ENCODE measurements at regions of chr1 and their contacts with region 1.

Region 1: DNA sequence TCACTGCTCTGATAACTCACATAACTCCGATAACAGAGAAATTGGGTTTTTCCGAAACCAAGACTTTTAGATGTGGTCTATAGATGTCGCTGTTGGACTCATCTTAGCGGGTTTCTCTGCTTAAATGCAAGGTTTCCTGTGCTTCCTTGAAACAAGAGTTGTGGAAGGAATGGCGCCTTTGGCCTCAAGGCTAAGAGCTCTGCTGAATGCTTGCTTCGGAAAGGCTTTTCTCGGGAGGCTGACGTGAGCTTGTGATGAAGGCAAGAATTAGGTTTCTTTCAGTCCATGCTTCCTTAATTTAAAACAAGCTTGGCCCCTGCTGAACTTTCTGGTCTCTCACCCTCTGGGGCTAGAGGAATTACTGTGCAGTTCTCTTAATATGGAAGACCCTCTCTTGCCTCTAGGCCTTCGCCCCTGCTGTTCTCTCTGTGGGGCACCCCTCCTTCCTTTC is 113.5 kb downstream of the MAP3K21 start:
- DNase-seq: peak; percentile 51 to 54
- H3K4me3 ChIP-seq: no peak overlapping the region
- H3K27ac ChIP-seq: no peak overlapping the region
- H3K4me1 ChIP-seq: peaks cover 0 to 6% (median 2%) of the 10 kb centered on the region in 4 experiments; a peak in 2 of 7 replicates
- H3K27me3 ChIP-seq: no peaks in the 10 kb centered on the region
- CTCF ChIP-seq: peak in 2 of 3 experiments; percentile 71 to 77; a peak in 3 of 4 replicates
- EP300 ChIP-seq: no peak
- POLR2A ChIP-seq: no peak
- RAD21 ChIP-seq: peak; percentile 94 to 96

Region 2: DNA sequence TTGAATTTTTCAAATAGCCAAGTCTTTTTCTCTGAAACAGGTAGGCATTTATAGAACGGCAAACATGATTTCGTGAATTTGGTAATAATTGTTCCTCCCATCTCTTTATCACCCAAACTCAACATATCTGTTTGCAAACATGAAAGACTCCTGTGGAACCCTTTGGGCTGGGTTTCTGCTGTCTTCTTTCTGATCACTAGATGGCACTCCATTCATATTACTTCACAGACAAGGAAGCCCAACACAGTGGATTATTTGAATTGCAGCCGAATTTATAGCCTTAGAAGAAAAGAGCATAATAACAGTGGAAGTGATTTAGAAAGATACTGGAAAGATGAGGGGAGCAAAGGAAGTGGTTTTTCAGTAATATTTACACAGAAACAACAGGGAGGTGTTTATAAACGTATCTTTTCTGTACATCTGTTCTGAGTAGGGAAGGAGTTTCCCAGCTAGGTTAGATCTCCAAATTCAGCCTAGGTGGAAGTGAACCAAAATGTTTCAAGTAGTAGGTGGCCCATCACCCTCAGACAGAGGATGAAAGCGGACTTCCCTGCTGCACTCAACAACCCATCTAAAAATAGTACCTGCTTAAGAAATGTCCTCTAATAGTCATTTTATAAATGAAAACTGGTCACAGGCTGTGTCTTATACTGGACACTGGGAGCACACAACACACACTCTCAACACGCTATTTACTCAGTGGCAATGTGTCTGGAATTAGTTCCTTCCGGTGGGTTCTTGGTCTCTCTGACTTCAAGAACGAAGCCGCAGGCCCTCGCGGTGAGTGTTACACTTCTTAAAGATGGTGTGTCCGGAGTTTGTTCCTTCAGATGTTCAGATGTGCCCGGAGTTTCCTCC is 45.9 kb before region 1 on chr1:
- CTCF ChIA-PET with region 1: interaction called, 31 read pairs
- POLR2A ChIA-PET with region 1: no interaction called
- DNase-seq: no peak
- H3K4me3 ChIP-seq: no peak overlapping the region
- H3K27ac ChIP-seq: no peak overlapping the region
- H3K4me1 ChIP-seq: peaks cover 0 to 4% (median 0%) of the 10 kb centered on the region in 4 experiments; a peak in 2 of 7 replicates
- H3K27me3 ChIP-seq: no peaks in the 10 kb centered on the region
- CTCF ChIP-seq: peak in 2 of 3 experiments; percentile 73 to 79; a peak in 3 of 4 replicates
- EP300 ChIP-seq: no peak
- POLR2A ChIP-seq: no peak
- RAD21 ChIP-seq: peak; percentile 94 to 96

Region 3: DNA sequence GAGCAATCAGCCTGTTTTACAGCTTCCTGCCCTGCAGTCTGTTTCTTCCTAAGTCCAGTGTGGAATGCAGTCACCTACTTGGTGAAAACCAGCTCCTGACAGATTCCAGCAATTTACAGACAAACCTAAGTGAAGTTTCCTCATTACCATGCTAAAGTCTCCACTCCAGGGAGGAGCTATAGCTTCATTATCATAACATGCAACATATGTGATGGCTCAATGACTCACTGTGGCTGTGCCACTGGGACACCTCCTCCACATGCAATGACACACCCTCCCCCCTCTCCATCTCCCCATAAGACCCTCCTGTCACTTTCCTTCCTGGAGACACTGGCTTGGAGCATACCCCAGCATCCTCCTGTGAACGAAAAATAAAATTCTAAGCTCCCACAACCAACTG is 11.7 kb after region 1 on chr1:
- CTCF ChIA-PET with region 1: interaction called, 23 read pairs
- POLR2A ChIA-PET with region 1: no interaction called
- DNase-seq: no peak
- H3K4me3 ChIP-seq: no peak overlapping the region
- H3K27ac ChIP-seq: no peak overlapping the region
- H3K4me1 ChIP-seq: no peaks in the 10 kb centered on the region
- H3K27me3 ChIP-seq: no peaks in the 10 kb centered on the region
- CTCF ChIP-seq: no peak
- EP300 ChIP-seq: no peak
- POLR2A ChIP-seq: no peak
- RAD21 ChIP-seq: no peak

Region 4: GRCh38 chr1:233518349-233518748 is 77.4 kb after region 1 on chr1:
- CTCF ChIA-PET with region 1: interaction called, 28 read pairs
- POLR2A ChIA-PET with region 1: no interaction called
- DNase-seq: peak; percentile 38 to 89
- H3K4me3 ChIP-seq: no peak overlapping the region
- H3K27ac ChIP-seq: no peak overlapping the region
- H3K4me1 ChIP-seq: peaks cover 0 to 8% (median 2%) of the 10 kb centered on the region in 4 experiments; a peak in 4 of 7 replicates
- H3K27me3 ChIP-seq: peaks cover 0 to 2% (median 0%) of the 10 kb centered on the region in 4 experiments; a peak in 1 of 7 replicates
- CTCF ChIP-seq: peak in 2 of 3 experiments; percentile 73 to 74; a peak in 3 of 4 replicates
- EP300 ChIP-seq: no peak
- POLR2A ChIP-seq: no peak
- RAD21 ChIP-seq: peak; percentile 59 to 74

Region 5: GRCh38 chr1:234065794-234066447 is 624.9 kb after region 1 on chr1:
- CTCF ChIA-PET with region 1: interaction called, 51 read pairs
- POLR2A ChIA-PET with region 1: no interaction called
- DNase-seq: peak; percentile 38 to 95
- H3K4me3 ChIP-seq: no peak overlapping the region
- H3K27ac ChIP-seq: no peak overlapping the region
- H3K4me1 ChIP-seq: no peaks in the 10 kb centered on the region
- H3K27me3 ChIP-seq: no peaks in the 10 kb centered on the region
- CTCF ChIP-seq: peak; percentile 79 to 81 (median 80)
- EP300 ChIP-seq: no peak
- POLR2A ChIP-seq: no peak
- RAD21 ChIP-seq: peak; percentile 85 to 87

Measured in H1 (cell line).